ENCODE measurements at regions of chr11 and their contacts with region 1.

Region 1: DNA sequence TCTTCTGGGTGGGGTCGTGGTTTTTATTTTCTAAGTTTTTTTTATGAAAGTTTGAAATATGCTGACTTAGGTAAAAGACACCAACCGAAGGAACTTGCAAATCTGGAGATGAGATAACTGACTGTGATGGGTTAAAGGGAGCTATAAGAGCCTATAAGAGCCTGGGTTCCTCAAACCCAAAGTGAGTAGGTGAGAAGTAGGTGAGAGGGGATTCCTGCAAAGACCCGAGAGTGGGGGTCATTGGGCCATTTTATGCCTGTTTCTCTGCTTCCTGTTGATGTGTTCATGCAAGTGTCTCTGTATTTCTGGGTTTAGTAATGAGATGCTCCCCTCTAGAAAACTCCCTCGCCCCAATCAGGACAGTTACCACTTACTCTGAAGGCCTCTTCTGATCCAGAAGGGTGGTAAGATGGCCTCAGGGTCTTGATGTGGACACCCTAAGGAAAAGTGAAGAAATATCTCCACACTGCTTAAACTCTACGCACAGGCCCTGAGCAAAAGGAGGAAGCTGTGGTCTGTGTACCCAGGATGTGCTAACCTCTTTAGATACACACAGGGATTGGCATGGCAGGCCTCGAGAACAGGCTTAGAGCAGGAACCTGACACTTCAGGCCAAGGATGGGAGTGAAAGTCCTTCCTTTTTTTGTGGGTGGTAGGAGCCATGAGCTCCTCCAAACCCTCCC is 1.8 kb downstream of the FLI1 start:
- DNase-seq: no peak
- ATAC-seq: peak in 4 of 8 donors; percentile 6 to 46 (median 40)
- H3K4me3 ChIP-seq: peak overlapping the region; percentile 72 to 92 (median 87)
- H3K27ac ChIP-seq: peak overlapping the region; percentile 86 to 99 (median 95)
- H3K4me1 ChIP-seq: peaks cover 2 to 83% (median 30%) of the 10 kb centered on the region in 9 donors
- H3K27me3 ChIP-seq: peaks cover 0 to 15% (median 3%) of the 10 kb centered on the region in 7 donors
- CTCF ChIP-seq: no peak

Region 2: DNA sequence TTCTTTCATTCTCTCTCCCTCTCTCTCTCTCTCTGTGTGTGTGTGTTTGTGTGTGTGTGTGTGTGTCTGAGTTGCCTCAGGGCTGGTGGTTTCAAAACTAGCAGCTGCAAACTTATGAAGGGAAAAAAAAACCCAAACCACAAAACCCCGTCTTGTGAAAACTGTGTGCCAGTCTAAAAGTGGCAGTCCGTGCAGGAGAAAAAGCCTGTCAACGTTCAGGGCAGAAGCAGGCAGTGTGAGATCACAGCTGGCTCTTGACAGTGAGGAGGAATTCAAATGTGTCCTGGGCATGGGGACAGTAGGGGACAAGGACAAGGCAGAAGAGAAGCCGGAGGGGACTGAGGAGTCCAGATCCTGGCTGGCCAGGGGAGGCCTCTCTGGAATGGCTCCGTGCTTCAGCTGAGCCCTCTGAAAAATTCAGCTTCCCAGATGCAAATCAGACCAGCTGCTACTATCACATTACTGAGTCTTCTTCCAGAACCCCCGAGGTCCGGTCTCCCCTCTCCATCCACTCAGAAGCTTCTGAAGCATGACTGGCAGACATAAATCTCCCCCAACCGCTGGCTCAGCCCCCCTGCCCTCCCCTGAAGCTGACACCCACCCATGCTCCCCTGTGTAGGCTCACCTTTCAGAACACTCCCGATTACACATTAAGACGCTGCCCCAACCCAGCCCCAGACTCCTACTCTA is 30.1 kb after region 1 on chr11:
- intact Hi-C with region 1: loop called in 2 of 10 experiments (anchors 5 kb)
- DNase-seq: peak in 1 of 2 donors; percentile 18
- ATAC-seq: peak in 7 of 8 donors; percentile 25 to 64 (median 42)
- H3K4me3 ChIP-seq: peak overlapping the region in 2 of 10 donors; percentile 4 to 20
- H3K27ac ChIP-seq: peak overlapping the region in 7 of 10 donors; percentile 12 to 88 (median 40)
- H3K4me1 ChIP-seq: peaks cover 18 to 100% (median 91%) of the 10 kb centered on the region in 9 donors
- H3K27me3 ChIP-seq: no peaks in the 10 kb centered on the region
- CTCF ChIP-seq: no peak

Region 3: DNA sequence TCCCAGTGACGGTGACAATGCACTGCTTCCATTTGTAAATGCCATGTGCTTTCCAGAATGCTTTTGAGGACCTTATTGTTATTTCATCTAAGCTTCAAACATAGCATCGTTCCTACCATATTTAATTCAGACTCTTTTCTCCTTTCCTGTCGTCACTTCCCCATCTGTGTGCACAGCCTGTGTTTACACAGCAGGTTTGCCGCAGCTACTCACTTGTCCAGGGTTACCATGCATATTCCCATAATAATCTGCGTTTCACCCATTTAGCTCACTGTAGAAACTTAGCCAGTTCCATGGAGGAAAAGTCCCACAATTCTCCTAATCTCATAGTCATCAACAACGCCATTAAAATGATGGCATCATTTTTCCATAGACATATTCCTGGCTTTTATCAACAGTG is 46.2 kb after region 1 on chr11:
- intact Hi-C with region 1: no loop called
- DNase-seq: no peak
- ATAC-seq: no peak
- H3K4me3 ChIP-seq: no peak overlapping the region
- H3K27ac ChIP-seq: peak overlapping the region in 1 of 10 donors; percentile 10
- H3K4me1 ChIP-seq: peaks cover 0 to 89% (median 59%) of the 10 kb centered on the region in 9 donors
- H3K27me3 ChIP-seq: no peaks in the 10 kb centered on the region
- CTCF ChIP-seq: no peak

Region 4: DNA sequence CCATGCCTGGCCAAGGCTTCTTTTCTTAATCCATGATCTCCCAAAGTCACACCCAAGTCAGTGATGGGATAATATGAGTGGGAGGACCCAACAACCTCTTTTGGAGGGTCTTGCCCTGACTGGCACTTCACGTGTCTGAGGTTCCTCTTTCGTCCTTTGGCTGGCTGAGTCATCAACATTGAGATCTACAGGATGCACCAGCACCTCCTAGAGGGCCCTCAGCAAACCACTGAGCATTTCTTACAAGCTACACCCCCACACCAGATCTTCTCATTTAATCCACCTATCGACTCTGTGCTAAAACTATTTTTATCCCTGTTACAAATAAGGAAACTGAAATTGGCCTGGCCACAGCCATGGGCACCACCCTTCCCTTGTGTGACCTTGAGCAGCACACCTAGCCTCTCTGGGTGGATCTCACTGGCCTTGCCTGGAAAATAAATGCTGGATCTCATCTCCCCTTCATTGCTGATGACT is 61.6 kb after region 1 on chr11:
- intact Hi-C with region 1: loop called in 2 of 10 experiments (anchors 5 to 10 kb)
- DNase-seq: peak in 1 of 2 donors; percentile 49
- ATAC-seq: peak; percentile 61 to 85 (median 72)
- H3K4me3 ChIP-seq: no peak overlapping the region
- H3K27ac ChIP-seq: peak overlapping the region in 1 of 10 donors; percentile 10
- H3K4me1 ChIP-seq: peaks cover 0 to 50% (median 17%) of the 10 kb centered on the region in 9 donors
- H3K27me3 ChIP-seq: no peaks in the 10 kb centered on the region
- CTCF ChIP-seq: peak in 8 of 9 donors; percentile 20 to 73 (median 40)

Region 5: DNA sequence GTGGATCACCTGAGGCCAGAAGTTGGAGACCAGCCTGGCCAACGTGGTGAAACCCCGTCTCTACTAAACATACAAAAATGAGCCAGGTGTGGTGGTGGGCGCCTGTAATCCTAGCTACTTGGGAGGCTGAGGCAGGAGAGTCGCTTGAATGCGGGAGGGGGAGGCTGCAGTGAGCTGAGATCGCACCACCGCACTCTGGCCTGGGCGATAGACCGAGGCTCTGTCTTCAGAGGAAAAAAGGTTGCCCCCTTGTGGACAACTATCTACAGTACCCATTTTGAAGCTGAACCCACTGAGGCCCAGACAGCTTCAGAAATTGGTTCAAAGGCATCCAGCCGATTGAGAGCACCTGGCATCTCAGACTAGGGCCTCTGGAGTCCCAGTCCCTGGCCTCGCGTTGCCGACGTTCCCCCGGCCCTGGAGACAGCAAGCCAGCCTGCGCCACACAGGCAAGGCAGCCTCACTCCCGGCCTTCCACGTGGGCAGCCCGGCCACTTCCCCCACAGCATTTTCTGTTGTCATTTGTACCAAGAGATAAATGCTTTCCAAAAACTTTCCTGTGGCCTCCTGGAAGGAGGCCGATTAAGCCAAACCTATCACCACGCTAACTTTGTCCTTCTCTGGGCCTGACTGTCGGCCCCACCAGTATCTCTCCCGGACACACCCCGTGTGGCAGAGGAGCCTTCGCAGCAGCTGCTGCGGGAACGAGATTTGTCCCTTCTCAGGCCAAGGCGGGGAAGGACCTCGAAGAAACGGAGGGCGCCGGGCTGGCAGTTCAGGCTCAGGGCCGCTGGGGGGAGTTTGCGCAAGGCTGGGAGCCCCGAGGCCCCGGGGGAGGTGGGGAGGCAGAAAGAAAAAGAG is 81.0 kb after region 1 on chr11:
- intact Hi-C with region 1: loop called in 2 of 10 experiments (anchors 5 kb)
- DNase-seq: peak; percentile 67 to 76
- ATAC-seq: peak; percentile 46 to 80 (median 65)
- H3K4me3 ChIP-seq: peak overlapping the region in 2 of 10 donors; percentile 8 to 11
- H3K27ac ChIP-seq: peak overlapping the region in 7 of 10 donors; percentile 18 to 67 (median 40)
- H3K4me1 ChIP-seq: peaks cover 5 to 72% (median 41%) of the 10 kb centered on the region in 9 donors
- H3K27me3 ChIP-seq: no peaks in the 10 kb centered on the region
- CTCF ChIP-seq: peak; percentile 27 to 67 (median 50)

Region 6: GRCh38 chr11:128824191-128825049 is 128.7 kb after region 1 on chr11:
- intact Hi-C with region 1: loop called in 1 of 10 experiments (anchors 5 kb)
- DNase-seq: no peak
- ATAC-seq: peak; percentile 38 to 86 (median 56)
- H3K4me3 ChIP-seq: peak overlapping the region in 8 of 10 donors; percentile 12 to 36 (median 26)
- H3K27ac ChIP-seq: peak overlapping the region in 6 of 10 donors; percentile 37 to 72 (median 54)
- H3K4me1 ChIP-seq: peaks cover 0 to 22% (median 6%) of the 10 kb centered on the region in 9 donors
- H3K27me3 ChIP-seq: peaks cover 0 to 11% (median 0%) of the 10 kb centered on the region in 7 donors
- CTCF ChIP-seq: no peak

Measured in heart right ventricle (tissue), 16 donors.